A673 (cell line): ENCODE measurements at regions of chr15 and their contacts with region 1.

Region 1: GRCh38 chr15:76139368-76140073 is 79.7 kb downstream of the TMEM266 start:
- DNase-seq: peak; percentile 87
- H3K4me3 ChIP-seq: no peak overlapping the region
- H3K27ac ChIP-seq: peak overlapping the region; percentile 5
- H3K4me1 ChIP-seq: peaks cover 9% of the 10 kb centered on the region
- H3K27me3 ChIP-seq: no peaks in the 10 kb centered on the region
- CTCF ChIP-seq: peak; percentile 92

Region 2: GRCh38 chr15:76059320-76060117 is 80.0 kb before region 1 on chr15 and contains the start of gene TMEM266:
- CTCF ChIA-PET with region 1: interaction called, 37 read pairs
- POLR2A ChIA-PET with region 1: interaction called, 3 read pairs
- intact Hi-C with region 1: loop called (anchors 1 kb)
- DNase-seq: peak; percentile 74
- H3K4me3 ChIP-seq: peak within 1 kb of the TSS; percentile 56
- H3K27ac ChIP-seq: no peak within 1 kb of the TSS
- H3K4me1 ChIP-seq: peaks cover 6% of the 10 kb centered on the region
- H3K27me3 ChIP-seq: peaks cover 55% of the 10 kb centered on the region
- CTCF ChIP-seq: no peak
- total RNA-seq, gene TMEM266: 0.17 TPM in 1 of 2 replicates, not detected in the other

Region 3: DNA sequence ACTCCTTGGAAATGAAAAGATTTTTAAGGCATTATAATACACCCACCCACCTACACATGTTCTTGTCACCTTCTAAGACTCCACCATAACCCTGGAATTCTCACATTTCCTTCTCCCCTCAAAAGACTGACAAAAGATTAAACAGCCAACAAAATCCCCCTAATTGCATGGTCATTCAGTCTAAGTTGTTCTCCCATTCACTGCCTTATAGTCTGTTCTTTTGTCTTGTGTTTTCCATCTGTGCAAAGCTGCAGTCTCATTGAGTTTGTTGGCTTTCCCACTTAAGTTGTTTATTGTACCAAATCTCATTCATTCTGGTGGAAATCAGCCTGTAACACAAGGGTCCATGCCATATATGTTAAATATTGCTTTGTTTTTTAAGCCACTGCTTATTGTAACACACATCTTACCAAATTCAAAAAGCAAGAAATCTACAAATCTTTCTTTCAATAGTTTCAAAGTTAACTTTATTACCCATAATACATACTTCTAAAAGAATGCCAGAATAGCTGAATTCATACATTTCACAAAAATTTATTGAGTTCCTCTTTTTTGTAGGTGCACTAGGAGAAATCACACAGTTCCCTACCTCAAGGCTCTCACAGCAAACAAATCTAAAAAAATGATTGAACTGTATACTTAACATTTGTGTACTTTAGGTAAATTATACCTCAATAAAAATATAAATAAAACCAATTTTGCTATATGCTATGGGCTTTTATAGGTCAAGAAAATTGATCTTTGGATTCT is 789.7 kb after region 1 on chr15:
- CTCF ChIA-PET with region 1: no interaction called
- POLR2A ChIA-PET with region 1: interaction called, 10 read pairs
- intact Hi-C with region 1: no loop called
- DNase-seq: no peak
- H3K4me3 ChIP-seq: no peak overlapping the region
- H3K27ac ChIP-seq: no peak overlapping the region
- H3K4me1 ChIP-seq: peaks cover 10% of the 10 kb centered on the region
- H3K27me3 ChIP-seq: no peaks in the 10 kb centered on the region
- CTCF ChIP-seq: no peak